IMR-90 (cell line): ENCODE measurements at regions of chr6 and their contacts with region 1.

Region 1: GRCh38 chr6:25992413-25993037 is 29.9 kb downstream of the TRIM38 start:
- DNase-seq: peak; percentile 90
- ATAC-seq: peak; percentile 98
- H3K4me3 ChIP-seq: peak overlapping the region; percentile 82
- H3K27ac ChIP-seq: peak overlapping the region; percentile 84
- H3K4me1 ChIP-seq: peaks cover 8% of the 10 kb centered on the region; the same call in 1 of the 2 replicates
- H3K27me3 ChIP-seq: no peaks in the 10 kb centered on the region
- CTCF ChIP-seq: peak; percentile 100
- POLR2A ChIP-seq: peak; percentile 73; the same call in 1 of the 2 replicates
- RAD21 ChIP-seq: peak; percentile 69

Region 2: DNA sequence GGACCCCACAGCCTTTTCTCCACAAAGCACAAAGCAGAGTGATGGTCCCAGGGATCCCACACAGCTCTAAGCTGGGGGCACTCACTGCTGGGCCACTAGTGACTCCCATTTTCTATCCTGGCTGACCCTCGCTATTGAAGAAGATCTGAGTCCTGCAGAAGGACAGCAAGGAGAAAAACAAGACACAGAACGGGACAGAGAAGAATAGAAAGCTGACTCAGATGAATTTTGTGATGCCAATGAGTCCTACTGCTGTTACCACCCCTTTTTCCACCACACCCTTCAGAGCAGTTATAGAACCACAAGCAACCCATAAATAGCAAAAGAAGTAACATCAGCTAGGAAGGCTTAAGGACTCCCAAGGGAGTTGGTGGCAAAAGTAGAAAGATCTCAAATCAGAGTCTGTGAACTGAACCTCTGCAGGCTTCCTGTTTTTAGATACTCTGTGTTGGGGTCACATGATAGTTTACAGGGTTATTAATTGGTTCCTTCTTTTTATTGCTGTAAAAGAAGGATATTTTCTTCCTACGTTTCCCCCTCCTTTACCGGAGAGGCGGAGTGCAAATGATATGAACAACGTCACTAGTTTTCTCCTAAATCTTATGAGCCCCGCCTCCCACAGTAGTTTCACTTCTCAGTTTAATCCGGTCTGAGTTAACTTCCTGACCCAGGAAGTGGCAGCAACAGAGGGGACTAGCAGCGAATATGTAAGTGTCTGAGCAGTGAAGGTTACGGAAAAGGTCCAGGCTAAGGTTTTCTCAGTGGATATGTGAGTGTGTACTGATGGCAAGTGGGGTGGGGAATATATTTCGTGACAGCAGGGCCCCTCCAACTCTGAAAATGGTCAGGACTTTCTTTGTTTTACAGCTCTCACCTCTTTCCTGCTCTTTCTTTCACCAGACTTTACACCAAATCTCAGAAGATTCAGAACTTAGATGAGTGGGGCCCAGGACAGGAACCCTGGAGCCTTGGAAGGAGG is 30.1 kb before region 1 on chr6 and contains the start of gene TRIM38:
- CTCF ChIA-PET with region 1: interaction called, 12 read pairs
- POLR2A ChIA-PET with region 1: interaction called, 3 read pairs
- dilution Hi-C with region 1: no loop called
- in situ Hi-C with region 1: no loop called
- intact Hi-C with region 1: no loop called
- DNase-seq: peak; percentile 89
- ATAC-seq: peak; percentile 92
- H3K4me3 ChIP-seq: peak within 1 kb of the TSS; percentile 61
- H3K27ac ChIP-seq: peak within 1 kb of the TSS; percentile 79
- H3K4me1 ChIP-seq: peaks cover 12% of the 10 kb centered on the region
- H3K27me3 ChIP-seq: no peaks in the 10 kb centered on the region
- CTCF ChIP-seq: no peak
- POLR2A ChIP-seq: peak; percentile 93
- RAD21 ChIP-seq: no peak
- total RNA-seq, gene TRIM38: 6.3 and 6.7 TPM in 2 replicates

Region 3: GRCh38 chr6:25968769-25969168 is 23.8 kb before region 1 on chr6:
- CTCF ChIA-PET with region 1: interaction called, 12 read pairs
- POLR2A ChIA-PET with region 1: no interaction called
- dilution Hi-C with region 1: no loop called
- in situ Hi-C with region 1: no loop called
- intact Hi-C with region 1: no loop called
- DNase-seq: peak; percentile 17
- ATAC-seq: no peak
- H3K4me3 ChIP-seq: no peak overlapping the region
- H3K27ac ChIP-seq: no peak overlapping the region
- H3K4me1 ChIP-seq: peaks cover 14% of the 10 kb centered on the region
- H3K27me3 ChIP-seq: no peaks in the 10 kb centered on the region
- CTCF ChIP-seq: no peak
- POLR2A ChIP-seq: no peak
- RAD21 ChIP-seq: no peak

Region 4: GRCh38 chr6:26003102-26003694 is 10.7 kb after region 1 on chr6:
- CTCF ChIA-PET with region 1: interaction called, 34 read pairs
- POLR2A ChIA-PET with region 1: no interaction called
- dilution Hi-C with region 1: no loop called
- in situ Hi-C with region 1: no loop called
- intact Hi-C with region 1: no loop called
- DNase-seq: peak; percentile 56
- ATAC-seq: peak; percentile 84
- H3K4me3 ChIP-seq: no peak overlapping the region
- H3K27ac ChIP-seq: no peak overlapping the region
- H3K4me1 ChIP-seq: 0 out of 2 replicates have a peak, but pooled peaks cover 1% of the 10 kb centered on the region
- H3K27me3 ChIP-seq: no peaks in the 10 kb centered on the region
- CTCF ChIP-seq: peak; percentile 78
- POLR2A ChIP-seq: no peak
- RAD21 ChIP-seq: peak; percentile 79

Region 5: GRCh38 chr6:26017632-26017966 is 25.1 kb after region 1 on chr6:
- CTCF ChIA-PET with region 1: interaction called, 12 read pairs
- POLR2A ChIA-PET with region 1: interaction called, 4 read pairs
- dilution Hi-C with region 1: no loop called
- in situ Hi-C with region 1: no loop called
- intact Hi-C with region 1: no loop called
- DNase-seq: peak; percentile 95
- ATAC-seq: peak; percentile 34
- H3K4me3 ChIP-seq: peak overlapping the region; percentile 44
- H3K27ac ChIP-seq: peak overlapping the region; percentile 78
- H3K4me1 ChIP-seq: peaks cover 12% of the 10 kb centered on the region
- H3K27me3 ChIP-seq: no peaks in the 10 kb centered on the region
- CTCF ChIP-seq: peak; percentile 72
- POLR2A ChIP-seq: peak; percentile 97
- RAD21 ChIP-seq: no peak